ENCODE measurements at regions of chr1 and their contacts with region 1.

Region 1: DNA sequence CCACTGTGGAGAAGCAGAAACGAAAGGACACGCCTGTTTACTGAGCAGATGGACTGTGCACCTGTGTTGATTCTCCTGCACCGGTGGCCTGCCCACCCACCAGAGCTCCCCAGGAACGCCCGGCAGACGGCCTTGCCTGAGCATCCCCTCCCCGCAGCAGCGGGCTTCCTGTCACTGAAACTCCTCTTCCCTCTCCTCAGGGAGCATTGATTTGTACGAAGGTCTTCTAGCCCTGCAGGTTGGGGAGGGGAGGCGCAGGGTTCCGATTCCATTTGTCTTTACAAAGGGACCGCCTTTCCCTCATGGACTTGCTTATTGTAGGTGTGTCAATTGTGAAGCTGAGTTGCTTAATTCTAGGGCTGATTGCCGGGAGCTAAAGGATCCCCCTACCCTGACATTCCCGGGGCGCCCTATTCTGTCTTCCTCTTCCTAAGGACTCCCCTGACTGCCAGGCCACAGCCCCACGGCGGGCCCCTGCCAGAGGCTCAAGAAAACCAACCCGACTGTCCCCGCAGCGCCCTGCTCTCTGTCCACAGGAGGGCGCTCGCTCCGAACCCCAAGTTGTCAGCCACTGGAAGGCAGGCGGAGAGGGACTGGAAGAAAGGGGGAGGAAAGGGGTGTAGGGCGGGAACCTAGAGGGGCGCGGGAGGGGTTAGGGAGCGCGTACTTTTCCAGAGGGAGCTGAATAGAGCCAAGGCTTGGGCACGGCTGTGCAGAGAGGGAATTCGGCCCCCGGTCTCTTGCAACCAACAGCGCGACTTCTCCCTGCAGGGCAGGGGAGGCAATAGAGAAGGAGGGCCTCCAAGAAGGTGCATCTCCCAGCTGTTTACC is 2.8 kb downstream of the S100A6 start:
- DNase-seq: peak; percentile 87 to 96
- H3K4me3 ChIP-seq: peak overlapping the region; percentile 12 to 54 (median 38); a peak in 7 of 8 replicates
- H3K27ac ChIP-seq: no peak overlapping the region
- H3K4me1 ChIP-seq: peaks cover 8 to 35% (median 21%) of the 10 kb centered on the region in 4 experiments
- H3K27me3 ChIP-seq: peaks cover 0 to 19% (median 6%) of the 10 kb centered on the region in 4 experiments; a peak in 5 of 7 replicates
- CTCF ChIP-seq: peak; percentile 85 to 93 (median 86)
- EP300 ChIP-seq: no peak
- POLR2A ChIP-seq: no peak
- RAD21 ChIP-seq: peak; percentile 78 to 92

Region 2: DNA sequence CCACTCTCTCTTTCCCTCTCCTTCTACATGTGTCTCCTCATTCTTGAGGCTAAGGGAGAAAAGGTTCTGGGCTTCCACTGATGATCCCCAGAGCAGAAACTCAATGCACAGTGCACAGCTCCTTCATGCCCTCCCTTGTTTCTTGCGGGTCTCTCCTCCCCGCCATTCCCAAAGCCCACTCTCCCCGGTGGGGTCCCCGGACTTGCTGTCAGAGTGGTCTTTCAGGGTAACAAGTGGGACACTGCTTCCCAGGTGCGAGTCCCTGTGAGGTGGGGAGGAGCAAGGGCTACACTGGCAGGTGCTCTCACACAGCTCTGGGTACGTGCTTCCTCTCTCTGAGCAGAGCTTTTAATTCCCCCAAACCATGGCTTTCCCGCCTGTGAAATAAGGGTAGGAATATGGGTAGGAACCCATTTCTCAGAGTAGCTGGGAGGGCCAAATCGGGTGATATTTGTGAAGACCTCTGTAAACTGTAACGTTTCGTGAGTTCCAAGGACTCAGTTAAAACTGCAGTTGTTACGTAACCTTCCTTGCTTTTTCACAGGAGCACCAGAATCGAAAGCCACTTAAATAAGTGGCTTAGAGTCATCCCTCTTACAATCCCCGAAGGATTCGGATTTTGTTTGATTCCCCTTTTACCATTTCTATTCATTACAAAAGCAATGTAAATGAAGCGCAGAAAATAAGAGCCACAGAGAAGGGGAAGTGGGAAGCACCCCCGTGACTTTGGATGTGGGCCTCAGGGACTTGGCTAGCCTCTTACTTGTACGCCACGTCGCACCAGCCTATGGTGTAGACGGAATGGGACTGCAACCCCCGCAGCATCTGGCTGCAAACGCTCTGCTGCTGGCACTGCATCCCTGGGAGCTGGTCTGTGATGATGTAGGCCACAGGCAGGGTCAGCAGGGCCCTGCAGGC is 226.4 kb before region 1 on chr1:
- CTCF ChIA-PET with region 1: no interaction called
- POLR2A ChIA-PET with region 1: no interaction called
- DNase-seq: no peak
- H3K4me3 ChIP-seq: no peak overlapping the region
- H3K27ac ChIP-seq: no peak overlapping the region
- H3K4me1 ChIP-seq: peaks cover 0 to 5% (median 0%) of the 10 kb centered on the region in 4 experiments; a peak in 3 of 7 replicates
- H3K27me3 ChIP-seq: no peaks in the 10 kb centered on the region; a peak in 1 of 7 replicates
- CTCF ChIP-seq: no peak
- EP300 ChIP-seq: no peak
- POLR2A ChIP-seq: no peak
- RAD21 ChIP-seq: no peak

Region 3: DNA sequence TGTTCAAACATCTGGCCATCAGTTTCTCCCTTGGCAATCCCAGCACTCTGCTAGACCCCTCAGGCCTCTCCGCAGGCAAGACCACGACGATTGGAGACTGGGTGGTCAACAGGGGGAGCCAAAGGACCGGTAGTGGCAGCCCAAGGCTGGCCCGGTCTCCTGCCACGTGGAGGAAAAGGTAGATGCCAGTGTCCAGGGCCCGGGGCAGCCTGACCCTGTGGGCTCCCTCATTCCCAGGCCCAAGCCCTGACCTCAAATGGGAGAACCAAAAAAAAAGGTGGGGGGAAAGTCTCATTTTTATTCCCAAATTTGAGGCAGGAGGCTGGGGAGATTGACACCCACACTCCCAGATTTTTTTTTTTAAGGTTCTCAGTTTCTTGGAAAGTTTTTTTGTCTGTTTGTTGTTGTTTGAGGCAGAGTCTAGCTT is 22.0 kb before region 1 on chr1:
- CTCF ChIA-PET with region 1: interaction called, 36 read pairs
- POLR2A ChIA-PET with region 1: interaction called, 5 read pairs
- DNase-seq: peak in 1 of 2 experiments; percentile 93
- H3K4me3 ChIP-seq: no peak overlapping the region
- H3K27ac ChIP-seq: no peak overlapping the region
- H3K4me1 ChIP-seq: peaks cover 0 to 3% (median 1%) of the 10 kb centered on the region in 4 experiments; a peak in 3 of 7 replicates
- H3K27me3 ChIP-seq: peaks cover 0 to 5% (median 2%) of the 10 kb centered on the region in 4 experiments; a peak in 3 of 7 replicates
- CTCF ChIP-seq: peak; percentile 95 to 97 (median 95)
- EP300 ChIP-seq: no peak
- POLR2A ChIP-seq: no peak
- RAD21 ChIP-seq: peak; percentile 99 to 100

Region 4: GRCh38 chr1:153545067-153546055 is 12.4 kb after region 1 on chr1 and contains the start of gene S100A4:
- CTCF ChIA-PET with region 1: interaction called, 165 read pairs
- POLR2A ChIA-PET with region 1: interaction called, 8 read pairs
- DNase-seq: peak in 1 of 2 experiments; percentile 87
- H3K4me3 ChIP-seq: peak within 1 kb of the TSS in 1 of 4 experiments; percentile 32; a peak in 2 of 8 replicates
- H3K27ac ChIP-seq: peak within 1 kb of the TSS; percentile 55
- H3K4me1 ChIP-seq: peaks cover 4 to 35% (median 21%) of the 10 kb centered on the region in 4 experiments
- H3K27me3 ChIP-seq: no peaks in the 10 kb centered on the region; a peak in 2 of 7 replicates
- CTCF ChIP-seq: no peak
- EP300 ChIP-seq: 0 out of 3 replicates have a peak, but pooled peaks of 1 of the 2 experiments have one; percentile 31
- POLR2A ChIP-seq: peak in 1 of 2 experiments; percentile 34; a peak in 1 of 3 replicates
- RAD21 ChIP-seq: no peak
- total RNA-seq, gene S100A4: 36.3 and 39.6 TPM in 2 replicates

Region 5: DNA sequence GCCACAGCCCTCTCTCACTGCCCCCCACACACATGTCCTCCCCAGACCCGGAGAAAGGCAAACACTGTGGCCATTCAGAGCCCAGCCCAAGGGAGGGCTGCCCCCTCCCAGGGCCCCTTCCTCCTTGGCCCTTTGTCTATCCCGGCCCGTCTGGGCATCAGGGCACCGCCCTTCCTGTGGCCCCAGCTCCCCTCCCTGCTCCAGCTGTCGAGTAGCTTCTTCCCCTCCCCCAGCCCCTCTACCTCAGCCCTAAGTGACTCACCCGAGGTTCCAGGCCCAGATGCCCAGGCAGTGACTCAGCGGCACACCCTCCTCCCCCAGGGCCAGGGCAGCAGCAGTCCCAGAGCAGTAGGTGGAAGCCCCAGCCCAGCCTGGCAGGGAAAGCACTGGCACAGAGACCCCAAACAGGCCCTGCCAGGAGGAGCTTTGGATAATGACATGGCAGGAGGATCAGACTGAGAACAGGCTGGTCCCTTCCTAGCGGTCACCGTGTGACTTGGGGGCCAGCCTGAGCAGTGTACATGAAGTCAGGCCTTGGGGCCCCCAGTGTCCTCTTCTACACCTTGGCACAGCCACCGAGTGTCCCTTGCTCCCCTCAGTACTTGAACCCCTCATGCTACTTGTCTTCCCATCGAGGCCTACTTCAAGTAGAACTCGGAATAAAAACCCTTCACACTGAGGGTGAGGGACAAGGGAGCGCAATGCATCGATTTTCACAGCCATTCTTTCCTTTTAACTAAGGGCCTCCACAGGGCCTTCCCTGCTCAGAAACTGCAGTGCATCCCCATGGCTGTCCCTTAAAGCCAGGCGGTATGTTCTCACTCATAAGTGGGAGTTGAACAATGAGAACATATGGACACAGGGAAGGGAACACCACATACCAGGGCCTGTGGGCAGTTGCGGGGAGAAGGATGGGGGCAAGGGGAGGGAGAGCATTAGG is 33.7 kb after region 1 on chr1:
- CTCF ChIA-PET with region 1: interaction called, 123 read pairs
- POLR2A ChIA-PET with region 1: interaction called, 10 read pairs
- DNase-seq: peak; percentile 76 to 90
- H3K4me3 ChIP-seq: no peak overlapping the region
- H3K27ac ChIP-seq: no peak overlapping the region
- H3K4me1 ChIP-seq: peaks cover 11 to 26% (median 20%) of the 10 kb centered on the region in 4 experiments
- H3K27me3 ChIP-seq: 0 out of 7 replicates have a peak, but pooled peaks cover 0 to 4% (median 0%) of the 10 kb centered on the region in 4 experiments
- CTCF ChIP-seq: no peak
- EP300 ChIP-seq: peak in 1 of 2 experiments; percentile 73; a peak in 1 of 3 replicates
- POLR2A ChIP-seq: peak in 1 of 2 experiments; percentile 24; a peak in 1 of 3 replicates
- RAD21 ChIP-seq: no peak; a peak in 2 of 4 replicates

Region 6: GRCh38 chr1:153577624-153578051 is 44.7 kb after region 1 on chr1:
- CTCF ChIA-PET with region 1: interaction called, 123 read pairs
- POLR2A ChIA-PET with region 1: interaction called, 3 read pairs
- DNase-seq: no peak
- H3K4me3 ChIP-seq: no peak overlapping the region
- H3K27ac ChIP-seq: no peak overlapping the region
- H3K4me1 ChIP-seq: peaks cover 0 to 3% (median 0%) of the 10 kb centered on the region in 4 experiments; a peak in 2 of 7 replicates
- H3K27me3 ChIP-seq: no peaks in the 10 kb centered on the region
- CTCF ChIP-seq: no peak
- EP300 ChIP-seq: no peak
- POLR2A ChIP-seq: no peak
- RAD21 ChIP-seq: no peak

Region 7: GRCh38 chr1:153608742-153609584 is 76.0 kb after region 1 on chr1:
- CTCF ChIA-PET with region 1: interaction called, 85 read pairs
- POLR2A ChIA-PET with region 1: interaction called, 4 read pairs
- DNase-seq: peak; percentile 41 to 90
- H3K4me3 ChIP-seq: no peak overlapping the region
- H3K27ac ChIP-seq: no peak overlapping the region
- H3K4me1 ChIP-seq: peaks cover 0 to 35% (median 21%) of the 10 kb centered on the region in 4 experiments; a peak in 6 of 7 replicates
- H3K27me3 ChIP-seq: no peaks in the 10 kb centered on the region; a peak in 1 of 7 replicates
- CTCF ChIP-seq: no peak
- EP300 ChIP-seq: no peak
- POLR2A ChIP-seq: no peak
- RAD21 ChIP-seq: no peak

Region 8: GRCh38 chr1:153633716-153634665 is 101.0 kb after region 1 on chr1 and contains the start of gene CHTOP:
- CTCF ChIA-PET with region 1: interaction called, 63 read pairs
- POLR2A ChIA-PET with region 1: interaction called, 13 read pairs
- DNase-seq: peak; percentile 98 to 100
- H3K4me3 ChIP-seq: peak within 1 kb of the TSS; percentile 73 to 100 (median 97)
- H3K27ac ChIP-seq: peak within 1 kb of the TSS; percentile 100
- H3K4me1 ChIP-seq: peaks cover 0 to 5% (median 5%) of the 10 kb centered on the region in 4 experiments; a peak in 5 of 7 replicates
- H3K27me3 ChIP-seq: no peaks in the 10 kb centered on the region
- CTCF ChIP-seq: peak in 1 of 3 experiments; percentile 10; a peak in 1 of 4 replicates
- EP300 ChIP-seq: no peak
- POLR2A ChIP-seq: peak; percentile 82 to 97
- RAD21 ChIP-seq: no peak
- total RNA-seq, gene CHTOP: 103 and 104 TPM in 2 replicates